ENCODE measurements at regions of chrX and their contacts with region 1.

Region 1: DNA sequence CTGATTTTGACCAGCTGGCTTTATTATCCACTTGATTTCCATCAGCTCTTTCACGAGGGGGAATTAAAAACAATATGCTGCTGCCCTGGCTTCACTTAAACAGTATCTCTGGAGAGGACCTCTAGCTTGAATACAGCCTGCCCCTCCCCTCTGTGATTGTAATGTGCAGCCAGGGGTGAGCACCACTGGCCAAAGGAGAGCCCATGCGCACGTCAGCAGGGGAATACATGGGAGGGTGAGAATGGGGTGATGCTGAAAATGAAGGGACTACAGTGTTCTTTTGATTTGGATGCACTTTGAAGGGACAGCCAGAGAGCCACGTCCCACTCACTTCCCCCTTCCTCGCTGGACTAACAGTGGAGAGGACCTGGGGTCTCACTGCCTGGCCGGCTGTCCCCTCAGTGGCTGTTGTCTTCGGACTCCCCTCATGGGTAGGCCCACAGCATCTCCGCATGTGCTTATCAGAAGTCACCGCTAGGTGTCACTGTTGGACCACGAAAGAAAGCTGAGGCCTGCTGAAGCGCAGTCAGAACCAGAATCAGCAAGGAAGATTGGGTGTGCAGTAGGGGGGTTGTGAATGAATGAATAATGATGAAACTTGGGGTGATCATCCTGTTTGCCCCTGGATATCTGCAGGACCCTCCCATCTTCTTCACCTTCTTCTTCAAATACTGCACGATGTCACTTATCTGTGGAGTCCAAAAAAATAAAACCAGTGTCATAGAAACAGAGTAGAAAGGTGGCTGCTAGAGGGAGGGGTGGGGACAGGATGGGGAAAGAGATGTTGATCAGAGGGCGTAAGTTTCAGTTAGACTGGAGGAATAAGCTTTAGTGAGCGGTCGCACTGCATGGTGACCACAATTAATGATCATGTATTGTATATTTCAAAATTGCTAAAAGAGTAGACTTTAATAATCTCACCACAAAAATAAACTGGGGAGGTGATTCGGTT is 32.8 kb downstream of the CLCN4 start:
- DNase-seq: peak; percentile 71 to 77 (median 74)
- ATAC-seq: peak; percentile 97
- H3K4me3 ChIP-seq: no peak overlapping the region
- H3K27ac ChIP-seq: no peak overlapping the region
- H3K4me1 ChIP-seq: peaks cover 0 to 3% of the 10 kb centered on the region in 2 donors
- H3K27me3 ChIP-seq: no peaks in the 10 kb centered on the region
- CTCF ChIP-seq: peak; percentile 72 to 82

Region 2: DNA sequence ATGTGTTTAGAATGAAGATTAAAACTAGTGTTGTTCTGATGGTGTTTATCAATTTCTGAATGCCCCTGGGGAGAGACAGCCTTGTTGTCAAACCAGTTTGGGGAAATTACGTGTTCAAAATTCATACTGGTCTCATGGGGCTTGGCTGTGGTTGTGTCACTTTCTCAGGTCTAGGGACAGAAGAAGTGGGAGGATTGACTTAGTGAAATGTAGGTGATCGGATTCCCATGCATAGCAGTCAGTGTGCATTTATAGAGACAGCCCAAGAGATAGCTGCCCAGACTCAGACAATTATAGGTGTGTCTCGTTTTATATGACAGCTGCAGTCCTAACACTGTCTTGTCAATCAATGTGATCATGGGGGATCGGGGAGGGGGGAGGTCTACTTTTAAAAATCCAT is 127.2 kb before region 1 on chrX:
- intact Hi-C with region 1: no loop called
- DNase-seq: no peak
- ATAC-seq: peak; percentile 15
- H3K4me3 ChIP-seq: no peak overlapping the region
- H3K27ac ChIP-seq: no peak overlapping the region
- H3K4me1 ChIP-seq: no peaks in the 10 kb centered on the region
- H3K27me3 ChIP-seq: no peaks in the 10 kb centered on the region
- CTCF ChIP-seq: no peak

Region 3: GRCh38 chrX:10636337-10636736 is 446.7 kb after region 1 on chrX:
- intact Hi-C with region 1: loop called in 1 of 2 experiments (anchors 10 kb)
- DNase-seq: peak in 1 of 4 donors; percentile 58
- ATAC-seq: peak; percentile 83
- H3K4me3 ChIP-seq: no peak overlapping the region
- H3K27ac ChIP-seq: peak overlapping the region in 1 of 2 donors; percentile 11
- H3K4me1 ChIP-seq: no peaks in the 10 kb centered on the region
- H3K27me3 ChIP-seq: no peaks in the 10 kb centered on the region
- CTCF ChIP-seq: peak; percentile 15 to 32

Region 4: DNA sequence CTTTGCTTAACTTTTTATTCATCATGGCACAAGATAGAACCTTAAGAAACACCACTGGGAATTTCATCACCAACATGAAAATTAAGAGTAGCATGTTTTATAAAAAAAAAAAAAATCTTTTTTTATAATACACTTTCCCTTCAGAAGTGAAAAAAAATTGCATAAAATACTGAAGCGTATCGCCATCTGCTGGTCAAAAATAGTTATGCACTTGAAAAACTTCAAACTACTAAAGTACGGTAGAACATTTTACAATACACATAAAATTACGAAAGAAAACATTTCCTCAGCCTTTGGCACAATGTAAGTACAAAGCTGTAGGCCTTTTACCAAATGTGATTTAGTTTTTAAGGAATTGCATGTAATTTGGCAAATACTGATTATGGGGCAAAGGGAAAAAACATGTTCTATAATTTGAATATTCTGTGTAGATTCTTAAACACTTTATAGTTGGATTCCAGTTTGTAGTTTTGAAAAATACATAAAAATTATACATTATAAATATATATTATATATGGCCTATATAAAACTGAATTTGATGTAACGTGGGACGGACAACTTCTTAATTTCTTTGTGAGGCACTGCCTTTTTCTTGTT is 948.0 kb after region 1 on chrX:
- intact Hi-C with region 1: loop called in 1 of 2 experiments (anchors 5 kb)
- DNase-seq: peak in 2 of 4 donors; percentile 24 to 55
- ATAC-seq: no peak
- H3K4me3 ChIP-seq: no peak overlapping the region
- H3K27ac ChIP-seq: no peak overlapping the region
- H3K4me1 ChIP-seq: no peaks in the 10 kb centered on the region
- H3K27me3 ChIP-seq: peaks cover 0 to 10% of the 10 kb centered on the region in 2 donors
- CTCF ChIP-seq: peak; percentile 51 to 57

Measured in left lung (tissue), 14 donors.